MCF 10A (cell line): ENCODE measurements at regions of chr1 and their contacts with region 1.

Region 1: DNA sequence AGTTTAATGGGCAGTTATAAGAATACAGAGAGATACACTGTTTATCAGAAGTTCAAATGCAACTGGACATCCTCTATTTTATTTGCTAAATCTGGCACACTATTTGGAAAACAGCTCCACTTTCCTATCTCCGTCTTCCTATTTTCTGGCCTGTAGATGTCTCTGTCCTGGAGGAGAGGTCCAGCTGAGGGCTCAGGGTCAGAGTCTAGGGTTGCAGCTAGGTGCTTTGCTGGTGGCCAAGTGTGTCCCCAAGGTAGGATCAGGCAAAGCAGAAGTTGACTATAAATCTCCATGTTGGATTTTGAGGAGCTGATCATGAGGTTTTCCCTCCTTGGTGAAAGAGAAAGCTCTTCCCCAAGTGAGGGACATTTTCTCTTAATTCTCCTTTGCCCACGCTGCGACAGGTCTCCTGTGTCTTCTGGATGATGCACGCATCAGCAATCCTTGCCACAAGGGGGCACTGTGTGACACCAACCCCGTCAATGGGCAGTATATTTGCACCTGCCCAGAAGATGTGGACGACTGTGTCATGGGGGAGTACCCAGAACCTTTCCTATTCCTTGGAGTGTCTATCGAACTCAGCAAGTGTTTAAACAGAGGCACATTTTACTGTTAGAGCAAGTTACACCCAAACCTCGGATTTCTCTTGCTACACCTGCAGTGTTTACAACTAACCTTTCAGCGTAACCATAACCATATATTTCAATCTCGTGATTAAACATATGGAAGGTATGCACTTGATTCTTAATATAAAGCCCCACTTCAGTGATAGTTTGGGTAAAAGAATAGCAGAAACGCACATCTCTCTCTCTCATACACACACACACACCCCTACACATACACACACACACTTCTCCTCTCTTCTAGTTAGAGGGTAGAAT is 10.2 kb downstream of the ADAM30 start:
- DNase-seq: peak; percentile 71
- H3K4me3 Mint-ChIP-seq: no peak overlapping the region
- H3K27ac Mint-ChIP-seq: no peak overlapping the region
- H3K4me1 Mint-ChIP-seq: no peaks in the 10 kb centered on the region
- H3K27me3 Mint-ChIP-seq: peaks cover 9% of the 10 kb centered on the region
- CTCF ChIP-seq: peak; percentile 88

Region 2: DNA sequence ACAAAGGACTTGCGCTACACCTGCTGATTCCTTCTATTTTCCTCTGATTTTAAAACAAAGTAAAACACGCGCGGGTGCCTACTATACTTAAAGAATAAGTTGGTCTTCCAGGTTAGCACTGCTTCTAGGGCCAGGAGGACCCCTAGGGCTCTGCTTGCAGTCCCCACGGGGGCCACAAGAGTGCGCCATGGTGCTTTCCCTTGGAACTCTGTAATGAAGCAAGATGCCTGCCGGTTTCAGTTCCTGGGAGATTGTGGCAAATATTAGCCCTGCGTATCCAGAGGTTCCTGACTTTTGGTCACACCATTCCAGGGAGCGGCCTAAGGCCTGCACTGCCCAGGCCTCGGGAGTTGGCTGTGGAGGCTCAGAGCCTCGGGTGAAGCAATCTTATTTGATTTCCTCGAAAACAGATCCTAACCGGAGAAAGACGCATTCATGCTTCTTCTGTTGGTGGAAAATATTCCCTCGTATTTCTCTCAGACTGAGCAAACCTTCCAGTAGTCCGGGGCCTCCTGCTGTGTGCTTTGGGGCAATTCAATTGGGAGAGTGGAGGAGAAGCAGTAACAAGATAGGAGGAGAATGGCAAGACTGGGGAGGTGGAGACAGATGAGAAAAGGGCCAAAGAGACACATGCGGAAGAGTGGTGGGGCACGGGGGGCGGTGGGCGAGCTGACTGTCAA is 15.1 kb before region 1 on chr1:
- CTCF ChIA-PET with region 1: interaction called, 47 read pairs
- POLR2A ChIA-PET with region 1: no interaction called
- intact Hi-C with region 1: no loop called
- DNase-seq: peak; percentile 77
- H3K4me3 Mint-ChIP-seq: no peak overlapping the region
- H3K27ac Mint-ChIP-seq: peak overlapping the region; percentile 59
- H3K4me1 Mint-ChIP-seq: peaks cover 6% of the 10 kb centered on the region
- H3K27me3 Mint-ChIP-seq: no peaks in the 10 kb centered on the region
- CTCF ChIP-seq: peak; percentile 98

Region 3: DNA sequence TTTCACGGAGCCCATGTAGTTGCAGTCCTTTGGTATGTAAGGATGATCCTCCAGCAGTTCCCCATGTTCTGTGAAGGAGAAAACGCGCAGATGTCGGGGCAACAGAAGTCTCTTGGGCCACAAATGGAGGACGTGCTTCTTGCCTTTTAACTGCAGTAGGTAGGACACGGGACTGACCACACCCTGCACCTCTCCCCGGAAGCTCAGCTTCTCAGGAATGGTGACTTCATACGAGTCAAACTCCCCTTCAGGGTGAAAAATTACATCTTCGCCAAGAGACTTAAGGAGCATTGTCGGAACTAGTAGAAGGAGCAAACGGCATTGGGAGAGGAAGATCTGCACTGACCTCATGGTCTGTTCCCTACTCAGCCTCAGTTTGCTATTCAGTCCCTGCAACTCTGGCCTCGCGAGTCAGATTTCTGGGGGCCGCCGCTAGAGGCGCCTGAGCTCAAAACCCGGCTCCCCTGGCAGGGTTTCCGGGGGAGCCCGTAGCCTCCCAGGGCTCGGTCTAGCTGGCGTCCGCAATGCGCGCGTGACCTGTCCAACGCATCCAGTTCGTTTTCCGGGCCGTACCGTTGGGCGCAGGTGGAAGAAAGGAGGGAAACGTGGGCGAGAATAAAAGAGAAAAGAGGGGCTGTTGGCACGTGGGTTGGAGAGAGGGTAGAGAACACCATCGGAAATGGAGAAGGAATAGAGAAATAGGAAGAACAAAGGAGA is 10.0 kb after region 1 on chr1 and contains the start of gene ADAM30:
- CTCF ChIA-PET with region 1: interaction called, 11 read pairs
- POLR2A ChIA-PET with region 1: interaction called, 3 read pairs
- intact Hi-C with region 1: no loop called
- DNase-seq: no peak
- H3K4me3 Mint-ChIP-seq: no peak within 1 kb of the TSS
- H3K27ac Mint-ChIP-seq: no peak within 1 kb of the TSS
- H3K4me1 Mint-ChIP-seq: peaks cover 7% of the 10 kb centered on the region
- H3K27me3 Mint-ChIP-seq: no peaks in the 10 kb centered on the region
- CTCF ChIP-seq: no peak
- total RNA-seq, gene ADAM30: not detected in 2 replicates

Region 4: GRCh38 chr1:119906927-119907652 is 20.9 kb after region 1 on chr1:
- CTCF ChIA-PET with region 1: interaction called, 11 read pairs
- POLR2A ChIA-PET with region 1: no interaction called
- intact Hi-C with region 1: no loop called
- DNase-seq: no peak
- H3K4me3 Mint-ChIP-seq: no peak overlapping the region
- H3K27ac Mint-ChIP-seq: no peak overlapping the region
- H3K4me1 Mint-ChIP-seq: no peaks in the 10 kb centered on the region
- H3K27me3 Mint-ChIP-seq: no peaks in the 10 kb centered on the region
- CTCF ChIP-seq: no peak

Region 5: GRCh38 chr1:119917304-119918055 is 31.3 kb after region 1 on chr1:
- CTCF ChIA-PET with region 1: interaction called, 16 read pairs
- POLR2A ChIA-PET with region 1: no interaction called
- intact Hi-C with region 1: no loop called
- DNase-seq: peak; percentile 23
- H3K4me3 Mint-ChIP-seq: no peak overlapping the region
- H3K27ac Mint-ChIP-seq: peak overlapping the region; percentile 58
- H3K4me1 Mint-ChIP-seq: peaks cover 7% of the 10 kb centered on the region
- H3K27me3 Mint-ChIP-seq: no peaks in the 10 kb centered on the region
- CTCF ChIP-seq: no peak

Region 6: GRCh38 chr1:119948342-119949214 is 62.4 kb after region 1 on chr1:
- CTCF ChIA-PET with region 1: interaction called, 3 read pairs
- POLR2A ChIA-PET with region 1: no interaction called
- intact Hi-C with region 1: loop called (anchors 1 kb)
- DNase-seq: peak; percentile 78
- H3K4me3 Mint-ChIP-seq: no peak overlapping the region
- H3K27ac Mint-ChIP-seq: peak overlapping the region; percentile 27
- H3K4me1 Mint-ChIP-seq: peaks cover 13% of the 10 kb centered on the region
- H3K27me3 Mint-ChIP-seq: no peaks in the 10 kb centered on the region
- CTCF ChIP-seq: peak; percentile 85